ENCODE measurements at regions of chr22 and their contacts with region 1.

Region 1: DNA sequence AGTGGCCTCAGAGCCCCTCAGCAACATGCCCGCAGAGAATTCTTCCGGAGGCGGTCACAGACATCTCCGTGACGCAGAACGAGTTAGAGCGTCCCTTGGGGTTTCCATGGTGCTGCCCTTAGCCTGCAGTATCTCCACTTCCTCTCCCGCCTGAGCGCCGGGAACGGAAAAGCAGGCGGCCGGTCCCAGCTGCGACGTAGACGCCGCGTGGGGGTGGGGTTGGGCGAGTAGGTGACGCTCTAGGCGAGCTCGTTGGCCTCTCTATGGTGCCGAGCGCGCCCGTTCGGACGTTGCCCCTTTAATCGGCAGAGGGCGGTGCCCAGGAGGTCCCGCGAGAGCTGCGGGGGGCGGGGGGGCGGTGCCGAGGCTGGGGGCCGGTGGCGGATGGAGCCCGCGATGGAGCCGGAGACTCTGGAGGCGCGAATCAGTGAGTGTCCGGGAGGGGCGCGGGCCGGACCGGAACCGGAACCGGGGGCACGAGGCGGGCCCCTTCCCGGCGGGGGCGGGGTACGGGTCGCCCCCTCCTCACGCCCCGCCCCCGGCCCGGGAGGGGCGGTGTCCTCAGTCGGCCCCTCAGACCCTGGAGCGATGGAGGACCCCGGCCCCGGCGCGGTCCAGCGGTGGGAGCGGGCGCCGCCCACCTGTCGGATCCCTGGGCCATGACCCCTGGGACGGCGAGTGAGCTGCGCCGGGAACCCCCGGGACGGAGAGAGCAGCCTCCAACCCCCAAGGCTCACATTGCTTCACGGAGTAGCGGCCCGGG is at the start of gene GGA1:
- DNase-seq: peak; percentile 99
- H3K4me3 ChIP-seq: peak within 1 kb of the TSS; percentile 77
- H3K27ac ChIP-seq: peak within 1 kb of the TSS; percentile 90
- H3K4me1 ChIP-seq: peaks cover 40% of the 10 kb centered on the region
- CTCF ChIP-seq: no peak
- total RNA-seq, gene GGA1: 119 and 127 TPM in 2 replicates

Region 2: DNA sequence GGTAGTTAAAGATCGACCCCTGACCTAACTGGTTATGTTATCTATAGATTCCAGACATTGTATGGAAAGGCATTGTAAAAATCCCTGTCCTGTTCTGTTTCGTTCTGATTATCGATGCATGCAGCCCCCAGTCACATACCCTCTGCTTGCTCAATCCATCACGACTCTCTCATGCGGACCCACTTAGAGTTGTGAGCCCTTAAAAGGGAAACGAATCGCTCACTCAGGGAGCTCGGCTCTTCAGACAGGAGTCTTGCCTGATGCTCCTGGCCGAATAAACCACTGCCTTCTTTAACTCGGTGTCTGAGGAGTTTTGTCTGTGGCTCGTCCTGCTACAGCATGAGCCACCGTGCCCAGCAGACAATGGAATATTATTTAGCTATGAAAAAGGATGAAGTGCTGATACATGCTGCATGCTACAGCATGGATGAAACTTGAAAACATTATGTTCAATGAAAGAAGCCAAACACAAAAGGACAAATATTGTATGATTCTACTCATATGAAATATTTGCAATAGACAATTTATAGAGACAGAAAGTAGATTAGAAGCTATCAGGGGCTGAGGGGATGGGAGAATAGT is 16.7 kb before region 1 on chr22:
- CTCF ChIA-PET with region 1: interaction called, 5 read pairs
- POLR2A ChIA-PET with region 1: interaction called, 12 read pairs
- intact Hi-C with region 1: no loop called
- DNase-seq: no peak
- H3K4me3 ChIP-seq: peak overlapping the region; percentile 64
- H3K27ac ChIP-seq: peak overlapping the region; percentile 2
- H3K4me1 ChIP-seq: no peaks in the 10 kb centered on the region
- CTCF ChIP-seq: no peak

Region 3: GRCh38 chr22:37643225-37643847 is 34.7 kb after region 1 on chr22:
- CTCF ChIA-PET with region 1: interaction called, 6 read pairs
- POLR2A ChIA-PET with region 1: no interaction called
- intact Hi-C with region 1: loop called (anchors 5 kb)
- DNase-seq: peak; percentile 79
- H3K4me3 ChIP-seq: no peak overlapping the region
- H3K27ac ChIP-seq: no peak overlapping the region
- H3K4me1 ChIP-seq: peaks cover 28% of the 10 kb centered on the region
- CTCF ChIP-seq: peak; percentile 91

Region 4: DNA sequence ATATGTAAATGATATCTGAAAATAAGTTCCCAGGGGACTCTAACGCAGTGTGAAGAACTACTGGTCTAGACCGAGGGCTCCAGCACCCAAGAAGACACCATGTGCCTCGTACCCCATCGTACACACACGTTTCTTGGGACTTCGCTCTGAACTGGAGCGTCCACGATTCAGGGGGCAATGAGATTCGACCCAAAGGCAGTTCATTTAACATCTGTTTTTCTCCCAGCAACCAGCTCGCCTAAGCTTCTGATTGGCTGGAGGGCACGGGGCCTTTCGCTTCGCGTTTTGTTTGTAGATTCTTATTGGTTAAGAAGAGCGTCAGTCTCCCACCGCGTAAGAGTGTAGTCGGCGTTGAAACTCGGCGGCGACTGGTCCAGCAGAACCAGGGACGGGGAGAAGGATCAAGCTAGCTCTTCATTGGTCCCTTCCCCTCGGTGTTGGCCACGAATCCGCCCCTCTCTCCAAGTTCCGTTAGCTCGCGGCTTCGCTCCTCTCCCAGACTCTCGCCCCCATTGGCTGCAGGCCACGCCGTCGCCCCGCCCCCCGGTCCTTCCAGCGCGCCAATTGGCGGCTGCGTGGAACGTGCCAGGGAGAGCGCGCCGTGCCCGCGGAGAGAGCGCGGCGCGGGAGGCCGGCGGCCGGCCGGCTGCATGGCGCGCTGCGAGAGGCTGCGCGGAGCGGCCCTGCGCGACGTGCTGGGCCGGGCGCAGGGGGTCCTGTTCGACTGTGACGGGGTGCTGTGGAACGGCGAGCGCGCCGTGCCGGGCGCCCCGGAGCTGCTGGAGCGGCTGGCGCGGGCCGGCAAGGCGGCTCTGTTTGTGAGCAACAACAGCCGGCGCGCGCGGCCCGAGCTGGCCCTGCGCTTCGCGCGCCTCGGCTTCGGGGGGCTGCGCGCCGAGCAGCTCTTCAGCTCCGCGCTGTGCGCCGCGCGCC is 49.7 kb after region 1 on chr22 and contains the start of gene PDXP:
- CTCF ChIA-PET with region 1: no interaction called
- POLR2A ChIA-PET with region 1: interaction called, 11 read pairs
- intact Hi-C with region 1: no loop called
- DNase-seq: peak; percentile 100
- H3K4me3 ChIP-seq: peak within 1 kb of the TSS; percentile 90
- H3K27ac ChIP-seq: peak within 1 kb of the TSS; percentile 70
- H3K4me1 ChIP-seq: peaks cover 32% of the 10 kb centered on the region
- CTCF ChIP-seq: no peak
- total RNA-seq, gene PDXP: 50.0 and 61.2 TPM in 2 replicates

Measured in OCI-LY7 (cell line).